ENCODE measurements at regions of chr15 and their contacts with region 1.

Region 1: GRCh38 chr15:83753949-83754416 is 100.1 kb downstream of the ADAMTSL3 start:
- DNase-seq: no peak
- H3K4me3 ChIP-seq: no peak overlapping the region
- H3K27ac ChIP-seq: peak overlapping the region in 3 of 4 donors; percentile 64 to 70 (median 67)
- H3K4me1 ChIP-seq: peaks cover 0 to 28% (median 10%) of the 10 kb centered on the region in 4 donors
- H3K27me3 ChIP-seq: no peaks in the 10 kb centered on the region
- CTCF ChIP-seq: no peak
- EP300 ChIP-seq: no peak
- POLR2A ChIP-seq: no peak

Region 2: DNA sequence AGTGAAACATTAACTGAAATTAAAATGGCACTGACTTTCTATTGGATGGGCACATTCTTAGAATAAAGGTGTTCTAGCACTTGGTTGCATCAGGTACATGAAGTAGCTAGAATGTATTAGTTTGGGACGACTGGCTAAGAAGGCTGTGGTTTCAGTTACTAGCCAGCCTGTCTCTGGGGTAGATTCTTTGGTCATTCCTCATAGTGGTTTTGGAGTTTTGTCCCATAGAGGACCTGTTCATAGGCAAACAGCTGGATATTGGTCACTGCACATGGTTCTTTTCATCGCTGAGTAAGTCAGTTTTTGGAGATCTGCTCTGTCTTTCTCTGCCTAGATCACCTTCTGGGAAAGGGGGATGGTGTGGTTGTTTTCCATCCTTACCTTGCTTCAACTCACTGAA is 44.7 kb before region 1 on chr15:
- intact Hi-C with region 1: no loop called
- DNase-seq: no peak
- H3K4me3 ChIP-seq: no peak overlapping the region
- H3K27ac ChIP-seq: no peak overlapping the region
- H3K4me1 ChIP-seq: peaks cover 0 to 14% (median 5%) of the 10 kb centered on the region in 4 donors
- H3K27me3 ChIP-seq: no peaks in the 10 kb centered on the region
- CTCF ChIP-seq: no peak
- EP300 ChIP-seq: no peak
- POLR2A ChIP-seq: no peak

Region 3: DNA sequence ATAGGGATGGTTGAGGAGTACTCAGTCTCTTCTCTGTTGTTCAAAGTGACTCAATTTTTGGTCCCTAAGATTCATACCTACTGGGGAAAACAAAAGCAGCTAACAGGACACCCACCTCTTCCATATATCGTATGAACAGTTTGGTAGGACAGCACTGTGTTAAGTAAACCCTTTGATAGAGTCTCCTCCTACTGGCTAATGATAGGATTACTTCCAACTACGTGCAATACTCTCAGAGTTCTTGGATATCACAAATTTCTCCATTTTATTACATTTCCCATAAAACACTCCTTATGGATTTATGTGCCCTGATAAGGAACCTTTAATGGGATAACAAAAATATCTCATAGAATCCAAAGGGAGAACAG is 281.4 kb after region 1 on chr15:
- intact Hi-C with region 1: loop called (anchors 10 kb)
- DNase-seq: no peak
- H3K4me3 ChIP-seq: no peak overlapping the region
- H3K27ac ChIP-seq: no peak overlapping the region
- H3K4me1 ChIP-seq: peaks cover 0 to 6% (median 2%) of the 10 kb centered on the region in 4 donors
- H3K27me3 ChIP-seq: no peaks in the 10 kb centered on the region
- CTCF ChIP-seq: peak; percentile 6 to 49 (median 26)
- EP300 ChIP-seq: no peak
- POLR2A ChIP-seq: no peak

Measured in sigmoid colon (tissue), 7 donors.